Activated CD4-positive, alpha-beta memory T cell treated with anti-CD3 and anti-CD28 coated beads for 36 hours (primary cell): ENCODE measurements at regions of chr5 and their contacts with region 1.

Region 1: DNA sequence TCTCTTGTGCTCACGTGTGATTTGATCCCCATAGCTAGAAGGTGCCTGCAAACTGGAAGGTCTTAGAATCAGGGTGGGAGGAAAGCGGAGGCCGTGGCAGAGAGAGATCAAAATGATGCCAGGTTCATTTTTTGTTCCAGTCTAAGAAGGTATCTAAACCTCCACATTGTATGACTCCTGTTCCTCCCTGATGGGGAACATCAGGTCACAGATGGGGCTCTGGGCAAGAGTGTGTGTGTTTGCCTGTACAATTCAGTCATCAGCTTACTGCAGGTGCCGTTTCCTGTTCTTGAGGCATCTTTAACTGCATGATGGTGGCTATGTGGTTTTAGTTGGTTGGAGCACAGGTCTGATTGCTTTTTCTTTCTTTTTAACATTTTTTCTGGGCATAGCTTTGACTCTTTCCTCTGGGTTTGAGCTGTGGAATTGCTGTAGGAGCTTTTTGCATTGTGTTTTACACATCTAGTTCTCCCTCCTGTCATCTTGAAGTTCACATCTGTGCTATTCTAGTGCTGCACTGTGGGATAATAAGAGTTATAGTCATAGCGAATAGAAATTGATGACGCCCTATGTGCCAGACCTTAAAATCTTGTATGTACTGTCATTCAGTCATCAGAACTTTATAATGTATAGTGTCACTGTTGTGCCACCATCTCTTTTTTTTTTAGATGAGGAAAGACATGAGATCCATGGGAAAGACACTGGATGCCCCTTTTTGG is 30.8 kb downstream of the ARHGAP26 start:
- DNase-seq: peak; percentile 71
- H3K4me3 Mint-ChIP-seq: peak overlapping the region; percentile 66
- H3K27ac Mint-ChIP-seq: peak overlapping the region; percentile 91
- H3K4me1 Mint-ChIP-seq: peaks cover 52% of the 10 kb centered on the region
- H3K27me3 Mint-ChIP-seq: no peaks in the 10 kb centered on the region

Region 2: GRCh38 chr5:142783601-142784341 is 17.2 kb before region 1 on chr5:
- CTCF ChIA-PET with region 1: interaction called, 12 read pairs
- POLR2A ChIA-PET with region 1: interaction called, 24 read pairs
- intact Hi-C with region 1: loop called (anchors 1 kb)
- DNase-seq: peak; percentile 90
- H3K4me3 Mint-ChIP-seq: peak overlapping the region; percentile 34
- H3K27ac Mint-ChIP-seq: peak overlapping the region; percentile 85
- H3K4me1 Mint-ChIP-seq: peaks cover 56% of the 10 kb centered on the region
- H3K27me3 Mint-ChIP-seq: no peaks in the 10 kb centered on the region

Region 3: DNA sequence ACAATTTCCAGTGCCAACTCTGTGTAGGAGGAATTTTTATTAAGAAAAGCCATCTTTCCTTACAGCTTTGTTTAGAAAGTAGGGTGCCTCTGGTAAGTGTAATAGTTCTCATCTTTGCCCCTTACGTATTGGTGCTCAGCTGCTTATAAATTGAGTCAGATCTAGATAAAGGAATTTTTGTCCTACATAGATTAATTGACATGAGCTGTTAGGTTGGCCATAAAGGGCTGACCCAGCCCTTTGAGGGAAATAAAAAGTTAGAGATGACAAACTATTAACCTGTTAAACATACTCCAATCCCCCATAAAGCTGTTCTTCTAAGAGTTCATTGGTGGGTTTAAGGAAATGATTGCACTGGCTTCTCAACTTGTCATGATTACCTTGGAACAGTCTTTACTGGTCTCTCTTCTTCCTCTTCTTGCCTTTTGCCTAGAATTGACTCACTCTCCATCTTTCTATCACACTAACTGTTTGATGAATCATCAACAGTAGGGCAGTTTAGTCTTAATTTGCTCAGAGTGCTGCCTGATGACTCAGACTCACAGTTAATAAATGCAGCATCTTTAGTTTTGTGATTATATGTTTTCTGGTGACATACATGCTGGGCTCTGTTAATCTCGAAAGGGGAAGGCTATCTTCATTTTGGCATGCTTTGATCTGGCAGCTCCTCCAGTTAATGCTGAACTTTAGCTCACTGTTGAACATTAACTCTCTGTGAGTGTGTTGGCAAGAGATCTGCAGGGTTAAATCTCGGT is 21.0 kb after region 1 on chr5:
- CTCF ChIA-PET with region 1: interaction called, 3 read pairs
- POLR2A ChIA-PET with region 1: interaction called, 8 read pairs
- intact Hi-C with region 1: loop called (anchors 1 kb)
- DNase-seq: peak; percentile 35
- H3K4me3 Mint-ChIP-seq: no peak overlapping the region
- H3K27ac Mint-ChIP-seq: peak overlapping the region; percentile 83
- H3K4me1 Mint-ChIP-seq: peaks cover 71% of the 10 kb centered on the region
- H3K27me3 Mint-ChIP-seq: no peaks in the 10 kb centered on the region

Region 4: GRCh38 chr5:142826741-142827732 is 26.1 kb after region 1 on chr5:
- CTCF ChIA-PET with region 1: interaction called, 3 read pairs
- POLR2A ChIA-PET with region 1: interaction called, 8 read pairs
- intact Hi-C with region 1: loop called (anchors 1 kb)
- DNase-seq: peak; percentile 73
- H3K4me3 Mint-ChIP-seq: no peak overlapping the region
- H3K27ac Mint-ChIP-seq: peak overlapping the region; percentile 55
- H3K4me1 Mint-ChIP-seq: peaks cover 64% of the 10 kb centered on the region
- H3K27me3 Mint-ChIP-seq: no peaks in the 10 kb centered on the region

Region 5: DNA sequence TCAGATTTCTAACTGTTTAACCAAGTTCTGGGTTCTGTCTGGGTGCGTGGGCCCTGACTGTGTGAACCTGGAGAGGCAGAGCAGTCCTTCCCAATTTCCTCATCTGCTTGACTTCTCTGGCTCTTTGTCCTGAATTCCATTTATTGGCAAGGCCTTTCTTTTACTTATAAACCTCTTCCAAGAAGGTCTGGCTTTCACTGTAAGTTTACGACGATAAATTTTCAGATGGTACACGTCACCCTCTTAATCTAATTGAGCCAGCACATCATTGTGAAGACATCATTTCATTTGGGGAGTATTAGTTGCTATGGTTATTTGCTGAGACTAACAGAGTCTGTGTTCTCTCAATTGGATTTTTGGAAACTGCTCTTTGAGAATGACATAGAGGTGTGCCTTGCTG is 61.7 kb after region 1 on chr5:
- CTCF ChIA-PET with region 1: interaction called, 4 read pairs
- POLR2A ChIA-PET with region 1: no interaction called
- intact Hi-C with region 1: loop called (anchors 2 kb)
- DNase-seq: no peak
- H3K4me3 Mint-ChIP-seq: no peak overlapping the region
- H3K27ac Mint-ChIP-seq: no peak overlapping the region
- H3K4me1 Mint-ChIP-seq: peaks cover 25% of the 10 kb centered on the region
- H3K27me3 Mint-ChIP-seq: no peaks in the 10 kb centered on the region

Region 6: DNA sequence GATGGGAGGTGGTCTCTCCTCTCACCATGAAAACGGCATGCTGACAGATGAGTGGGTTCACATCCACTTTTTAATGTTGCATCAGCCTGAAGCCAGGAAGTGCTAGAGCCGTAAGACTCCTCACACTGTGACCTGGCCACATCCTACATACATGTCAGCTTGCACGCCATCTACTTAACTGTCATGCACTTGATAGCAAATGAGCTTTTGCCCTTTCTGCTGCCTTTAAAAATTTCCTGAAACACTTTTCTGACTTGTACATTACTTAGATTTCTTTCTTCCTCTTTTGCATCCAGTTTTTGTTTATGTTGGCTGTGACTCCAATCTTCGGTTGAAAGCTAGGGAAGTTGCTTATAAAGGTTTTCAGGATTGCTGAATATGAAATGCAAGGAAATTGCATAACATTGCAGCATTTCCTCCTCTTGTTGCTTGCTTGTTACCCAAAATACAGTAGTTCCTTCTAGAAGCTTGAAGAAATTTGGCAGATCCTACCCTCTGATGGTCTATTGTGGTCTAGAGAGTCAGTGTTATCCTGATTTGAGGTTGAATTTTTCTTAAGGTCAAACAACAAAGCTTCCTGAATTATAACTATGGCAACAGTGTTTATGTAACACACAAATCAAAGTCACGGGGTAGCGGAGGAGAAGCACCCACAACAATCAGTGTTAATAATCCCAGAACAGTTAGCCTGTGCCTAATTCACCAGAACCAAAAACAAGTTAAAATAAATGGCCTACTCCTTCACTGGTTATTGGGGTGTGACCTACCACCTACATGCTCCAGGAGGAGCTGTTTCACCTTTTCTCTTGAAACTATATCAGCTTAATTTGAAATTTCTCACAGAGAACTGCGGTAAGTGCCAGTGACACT is 201.8 kb after region 1 on chr5:
- CTCF ChIA-PET with region 1: no interaction called
- POLR2A ChIA-PET with region 1: no interaction called
- intact Hi-C with region 1: loop called (anchors 1 kb)
- DNase-seq: peak; percentile 79
- H3K4me3 Mint-ChIP-seq: peak overlapping the region; percentile 52
- H3K27ac Mint-ChIP-seq: peak overlapping the region; percentile 91
- H3K4me1 Mint-ChIP-seq: peaks cover 56% of the 10 kb centered on the region
- H3K27me3 Mint-ChIP-seq: no peaks in the 10 kb centered on the region